Activated CD4-positive, alpha-beta T cell treated with anti-CD3 and anti-CD28 coated beads, Interleukin-2, amount 10 ng/mL, durations not matched to agents 24 days and 14 days (primary cell): ENCODE measurements at regions of chr17 and their contacts with region 1.

Region 1: GRCh38 chr17:979538-980405 is at the start of gene NXN:
- DNase-seq: peak; percentile 96
- H3K4me3 Mint-ChIP-seq: peak within 1 kb of the TSS; percentile 81
- H3K27ac Mint-ChIP-seq: no peak within 1 kb of the TSS
- H3K4me1 Mint-ChIP-seq: peaks cover 12% of the 10 kb centered on the region
- H3K27me3 Mint-ChIP-seq: peaks cover 34% of the 10 kb centered on the region
- total RNA-seq, gene NXN: 0.14 and 0.28 TPM in 2 replicates

Region 2: GRCh38 chr17:143782-144281 is 835.9 kb before region 1 on chr17:
- intact Hi-C with region 1: loop called (anchors 5 kb)
- DNase-seq: peak; percentile 97
- H3K4me3 Mint-ChIP-seq: no peak overlapping the region
- H3K27ac Mint-ChIP-seq: no peak overlapping the region
- H3K4me1 Mint-ChIP-seq: peaks cover 5% of the 10 kb centered on the region
- H3K27me3 Mint-ChIP-seq: peaks cover 7% of the 10 kb centered on the region

Region 3: GRCh38 chr17:409848-410545 is 569.8 kb before region 1 on chr17:
- intact Hi-C with region 1: loop called (anchors 2 kb)
- DNase-seq: peak; percentile 100
- H3K4me3 Mint-ChIP-seq: peak overlapping the region; percentile 93
- H3K27ac Mint-ChIP-seq: peak overlapping the region; percentile 100
- H3K4me1 Mint-ChIP-seq: peaks cover 57% of the 10 kb centered on the region
- H3K27me3 Mint-ChIP-seq: peaks cover 5% of the 10 kb centered on the region

Region 4: DNA sequence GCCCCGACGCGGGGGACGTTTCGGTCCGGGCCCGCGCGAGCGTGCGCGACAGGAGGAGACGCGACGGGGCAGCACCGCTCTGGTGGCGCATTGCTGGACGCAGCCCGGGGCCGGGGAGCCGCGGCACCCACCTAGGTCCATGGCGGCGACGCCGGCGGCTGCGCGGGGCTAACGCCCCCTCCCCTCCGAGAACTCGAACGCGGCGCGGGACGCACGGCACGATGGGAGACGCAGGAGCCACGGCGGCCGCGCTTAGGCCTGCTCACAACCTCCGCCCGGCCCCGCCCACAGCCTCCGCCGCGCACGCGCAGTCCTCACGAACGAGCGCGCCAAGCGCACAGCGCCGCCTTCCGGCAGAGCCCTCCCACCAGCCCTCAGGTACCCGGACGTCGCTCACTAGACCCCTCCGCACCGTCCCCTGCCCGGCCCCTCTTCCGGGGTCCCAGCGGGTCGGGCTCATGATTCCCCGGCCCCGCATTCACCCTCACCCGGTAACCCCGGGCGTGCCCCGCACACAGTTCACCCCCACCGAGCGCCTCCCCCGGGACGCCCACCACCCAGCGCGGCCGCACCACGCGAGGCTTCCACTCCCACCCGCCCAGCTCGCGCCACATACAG is 227.7 kb before region 1 on chr17 and contains the start of gene GEMIN4:
- intact Hi-C with region 1: loop called (anchors 1 kb)
- DNase-seq: peak; percentile 100
- H3K4me3 Mint-ChIP-seq: peak within 1 kb of the TSS; percentile 100
- H3K27ac Mint-ChIP-seq: peak within 1 kb of the TSS; percentile 98
- H3K4me1 Mint-ChIP-seq: peaks cover 35% of the 10 kb centered on the region
- H3K27me3 Mint-ChIP-seq: no peaks in the 10 kb centered on the region
- total RNA-seq, gene GEMIN4: 71.4 and 80.3 TPM in 2 replicates

Region 5: DNA sequence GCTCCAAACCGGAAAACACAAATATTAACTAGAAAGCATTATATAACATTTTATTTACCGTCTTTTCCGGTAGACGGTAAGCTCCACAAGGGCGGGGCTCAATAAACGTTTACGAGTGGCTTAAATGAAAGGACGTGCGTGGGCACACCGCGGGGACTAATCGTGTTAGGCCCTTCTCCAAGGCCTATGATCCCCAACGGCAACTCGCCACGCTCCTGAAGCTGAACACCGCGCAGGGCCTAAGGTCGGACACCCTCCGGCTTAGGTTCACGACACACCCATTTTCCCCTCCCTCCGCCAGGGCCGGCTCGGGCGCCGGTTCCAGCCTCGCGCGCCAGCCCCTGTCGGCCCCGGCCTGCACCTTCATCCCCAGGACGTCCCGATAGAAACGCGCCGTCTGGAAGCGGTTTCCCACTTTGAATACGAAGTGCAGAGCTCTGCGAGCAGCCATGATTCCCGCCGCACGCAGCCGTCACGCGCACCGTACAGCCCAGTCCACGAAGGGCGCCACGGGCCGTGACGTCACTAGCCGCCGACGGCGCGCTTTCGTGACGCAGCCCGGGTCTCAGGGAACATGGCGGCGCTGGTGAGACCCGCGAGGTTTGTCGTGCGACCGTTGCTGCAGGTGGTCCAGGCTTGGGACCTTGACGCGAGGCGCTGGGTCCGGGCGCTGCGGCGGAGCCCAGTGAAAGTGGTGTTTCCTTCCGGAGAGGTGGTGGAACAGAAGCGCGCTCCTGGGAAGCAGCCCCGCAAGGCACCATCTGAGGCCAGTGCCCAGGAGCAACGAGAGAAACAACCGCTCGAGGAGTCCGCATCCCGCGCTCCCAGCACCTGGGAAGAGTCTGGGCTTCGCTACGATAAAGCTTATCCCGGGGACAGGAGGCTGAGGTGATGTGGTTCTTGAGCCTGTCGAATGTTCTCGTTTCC is 197.7 kb before region 1 on chr17 and contains the starts of genes GLOD4 and MRM3:
- intact Hi-C with region 1: loop called (anchors 5 kb)
- DNase-seq: peak; percentile 100
- H3K4me3 Mint-ChIP-seq: peak within 1 kb of the TSS; percentile 96
- H3K27ac Mint-ChIP-seq: peak within 1 kb of the TSS; percentile 92
- H3K4me1 Mint-ChIP-seq: peaks cover 26% of the 10 kb centered on the region
- H3K27me3 Mint-ChIP-seq: no peaks in the 10 kb centered on the region
- total RNA-seq, gene GLOD4: 82.4 and 83.2 TPM in 2 replicates
- total RNA-seq, gene MRM3: 32.5 and 33.1 TPM in 2 replicates

Region 6: DNA sequence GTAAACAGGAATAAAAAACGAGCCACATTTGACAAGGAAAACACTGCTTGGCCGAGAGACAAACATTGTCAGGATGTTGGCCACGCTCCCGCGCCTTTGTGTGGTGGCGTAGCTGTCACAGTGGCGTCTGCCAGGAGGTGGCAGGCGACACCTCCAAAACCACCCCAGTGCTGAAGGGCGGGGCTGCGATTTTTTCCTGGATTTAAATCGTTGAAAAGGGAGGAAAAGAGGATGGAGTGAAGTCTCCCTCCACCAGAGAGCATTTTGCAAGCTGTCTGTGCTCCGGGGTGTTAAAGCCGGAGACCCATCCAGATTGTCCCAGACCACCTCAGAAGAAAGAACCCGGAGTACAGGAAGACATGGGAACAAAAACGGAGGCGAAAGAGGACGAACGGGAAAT is 184.9 kb before region 1 on chr17:
- intact Hi-C with region 1: loop called (anchors 1 kb)
- DNase-seq: peak; percentile 82
- H3K4me3 Mint-ChIP-seq: no peak overlapping the region
- H3K27ac Mint-ChIP-seq: no peak overlapping the region
- H3K4me1 Mint-ChIP-seq: peaks cover 4% of the 10 kb centered on the region
- H3K27me3 Mint-ChIP-seq: no peaks in the 10 kb centered on the region

Region 7: DNA sequence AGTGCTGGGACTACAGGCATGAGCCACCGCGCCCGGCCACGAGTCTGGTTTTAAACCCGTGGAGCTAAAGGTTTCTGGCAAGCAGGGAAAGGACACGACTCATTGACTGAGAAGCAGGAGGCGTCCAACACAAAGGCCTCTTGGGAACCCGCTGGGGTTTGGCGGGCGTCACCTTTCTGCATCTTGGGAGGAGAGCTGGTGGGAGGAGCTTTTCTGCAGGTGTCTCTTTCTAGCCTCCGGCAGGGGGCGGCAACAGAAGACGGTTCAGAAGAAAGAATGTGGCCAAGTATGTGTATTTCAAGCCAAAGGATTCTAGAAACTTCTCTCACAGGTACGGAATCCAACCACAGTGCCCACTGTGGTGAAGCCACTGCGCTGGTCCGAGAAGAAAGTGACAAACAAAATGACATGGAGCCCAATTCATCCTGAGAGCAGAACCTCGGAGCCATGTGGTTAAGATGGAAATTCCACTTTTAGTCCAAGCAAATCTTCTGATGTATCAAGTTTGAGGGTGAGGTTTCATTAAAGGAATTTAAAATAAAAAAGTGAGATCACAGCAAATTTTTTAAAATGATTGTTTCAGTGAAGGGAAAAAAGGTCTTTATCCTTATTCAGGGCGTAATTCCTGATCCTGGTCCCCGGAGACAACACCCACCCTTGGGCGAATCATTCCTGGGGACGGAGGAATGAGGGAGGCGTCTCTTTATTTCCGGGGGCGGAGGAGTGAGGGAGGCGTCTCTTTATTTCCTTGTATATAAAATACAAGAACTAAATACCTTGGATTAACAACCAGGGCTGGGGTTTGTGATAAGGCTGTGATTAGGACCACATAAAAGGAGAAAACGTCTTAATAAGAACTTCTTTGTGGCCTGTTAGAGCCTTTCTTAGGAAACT is 100.0 kb before region 1 on chr17:
- intact Hi-C with region 1: loop called (anchors 1 kb)
- DNase-seq: peak; percentile 88
- H3K4me3 Mint-ChIP-seq: no peak overlapping the region
- H3K27ac Mint-ChIP-seq: no peak overlapping the region
- H3K4me1 Mint-ChIP-seq: peaks cover 14% of the 10 kb centered on the region
- H3K27me3 Mint-ChIP-seq: peaks cover 1% of the 10 kb centered on the region

Region 8: GRCh38 chr17:1179818-1180742 is 200.3 kb after region 1 on chr17 and contains the start of gene ABR:
- intact Hi-C with region 1: no loop called
- DNase-seq: peak; percentile 84
- H3K4me3 Mint-ChIP-seq: peak within 1 kb of the TSS; percentile 72
- H3K27ac Mint-ChIP-seq: no peak within 1 kb of the TSS
- H3K4me1 Mint-ChIP-seq: peaks cover 5% of the 10 kb centered on the region
- H3K27me3 Mint-ChIP-seq: peaks cover 26% of the 10 kb centered on the region
- total RNA-seq, gene ABR: 58.9 and 66.4 TPM in 2 replicates